ENCODE measurements at regions of chr12 and their contacts with region 1.

Region 1: GRCh38 chr12:28253161-28253641 is 62.9 kb downstream of the CCDC91 start:
- DNase-seq: peak; percentile 66
- H3K4me3 Mint-ChIP-seq: peak overlapping the region; percentile 54
- H3K27ac Mint-ChIP-seq: peak overlapping the region; percentile 86
- H3K4me1 Mint-ChIP-seq: peaks cover 67% of the 10 kb centered on the region
- H3K27me3 Mint-ChIP-seq: no peaks in the 10 kb centered on the region

Region 2: DNA sequence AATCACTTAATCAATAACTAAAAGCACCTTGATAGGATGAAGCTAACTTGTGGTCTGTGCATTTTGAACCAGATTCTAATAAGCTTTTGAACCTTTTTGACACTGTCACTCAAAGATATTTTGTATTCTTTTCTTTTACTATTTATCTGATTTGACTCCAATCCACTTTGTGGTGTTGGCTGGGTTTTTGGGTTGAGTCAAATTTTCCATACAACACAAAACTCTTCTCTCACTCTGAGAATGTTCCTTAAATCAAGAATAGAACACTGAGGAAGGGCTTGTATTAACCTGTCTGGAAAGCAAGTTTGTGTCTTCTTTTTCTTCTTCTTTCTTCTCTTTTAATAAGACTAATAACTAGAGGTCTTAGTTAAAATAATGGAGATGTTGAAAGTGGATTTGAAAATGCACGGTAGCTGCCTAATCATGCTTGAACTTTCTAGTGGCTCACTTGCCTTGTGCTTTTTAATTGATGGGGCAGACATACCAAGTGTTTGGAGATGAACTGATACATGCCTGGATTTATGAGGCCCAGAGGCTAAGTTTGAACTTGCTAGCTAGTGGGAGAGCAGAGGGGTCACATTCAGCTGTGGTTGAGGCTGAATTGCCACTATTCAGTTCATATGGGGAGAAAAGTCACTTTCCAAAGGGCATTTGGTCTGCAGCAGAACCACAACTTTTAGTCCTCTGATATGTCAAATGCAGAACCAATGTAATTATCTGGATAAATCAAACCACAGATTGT is 187.1 kb before region 1 on chr12:
- CTCF ChIA-PET with region 1: no interaction called
- POLR2A ChIA-PET with region 1: no interaction called
- intact Hi-C with region 1: loop called (anchors 1 kb)
- DNase-seq: no peak
- H3K4me3 Mint-ChIP-seq: no peak overlapping the region
- H3K27ac Mint-ChIP-seq: no peak overlapping the region
- H3K4me1 Mint-ChIP-seq: peaks cover 11% of the 10 kb centered on the region
- H3K27me3 Mint-ChIP-seq: peaks cover 3% of the 10 kb centered on the region

Region 3: DNA sequence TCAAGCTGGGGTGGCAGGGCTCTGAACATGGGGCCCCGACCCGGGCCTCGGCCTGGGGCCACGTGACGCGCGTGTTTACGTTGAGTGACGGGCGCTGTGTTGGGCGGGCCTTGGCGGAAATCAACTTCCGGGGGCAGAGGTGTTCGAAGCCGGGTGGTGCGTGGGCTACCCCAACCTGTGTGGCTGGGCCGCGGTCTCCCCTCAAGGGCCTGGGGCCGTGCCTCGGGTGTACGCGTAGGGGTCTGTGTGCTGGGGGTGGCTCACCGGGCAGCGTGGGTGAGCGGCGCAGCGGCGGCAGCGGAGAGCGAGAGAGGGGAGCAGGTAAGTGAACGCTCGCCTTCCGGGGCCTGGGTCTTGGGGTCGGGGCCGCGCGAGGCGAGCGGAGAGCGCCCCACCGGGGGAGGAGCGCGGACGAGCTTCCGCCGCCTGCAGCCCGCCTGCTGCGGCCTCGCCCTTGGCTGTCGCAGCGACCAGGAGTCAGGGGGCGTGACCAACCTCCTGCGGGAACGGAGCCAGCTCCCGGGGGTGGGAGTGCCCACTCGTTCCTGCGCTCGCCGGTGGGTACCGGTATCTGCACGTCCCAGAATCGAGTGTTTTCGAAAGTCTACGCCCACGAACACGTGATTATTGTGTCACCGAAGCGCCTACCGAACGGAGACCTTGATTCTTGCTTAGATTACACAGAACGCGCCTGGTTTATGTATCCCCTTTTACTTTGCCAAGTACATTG is 62.7 kb before region 1 on chr12 and contains the start of gene CCDC91:
- CTCF ChIA-PET with region 1: interaction called, 4 read pairs
- POLR2A ChIA-PET with region 1: interaction called, 10 read pairs
- intact Hi-C with region 1: loop called (anchors 1 kb)
- DNase-seq: peak; percentile 92
- H3K4me3 Mint-ChIP-seq: peak within 1 kb of the TSS; percentile 98
- H3K27ac Mint-ChIP-seq: peak within 1 kb of the TSS; percentile 99
- H3K4me1 Mint-ChIP-seq: peaks cover 57% of the 10 kb centered on the region
- H3K27me3 Mint-ChIP-seq: no peaks in the 10 kb centered on the region
- total RNA-seq, gene CCDC91: 16.5 to 19.7 TPM

Region 4: DNA sequence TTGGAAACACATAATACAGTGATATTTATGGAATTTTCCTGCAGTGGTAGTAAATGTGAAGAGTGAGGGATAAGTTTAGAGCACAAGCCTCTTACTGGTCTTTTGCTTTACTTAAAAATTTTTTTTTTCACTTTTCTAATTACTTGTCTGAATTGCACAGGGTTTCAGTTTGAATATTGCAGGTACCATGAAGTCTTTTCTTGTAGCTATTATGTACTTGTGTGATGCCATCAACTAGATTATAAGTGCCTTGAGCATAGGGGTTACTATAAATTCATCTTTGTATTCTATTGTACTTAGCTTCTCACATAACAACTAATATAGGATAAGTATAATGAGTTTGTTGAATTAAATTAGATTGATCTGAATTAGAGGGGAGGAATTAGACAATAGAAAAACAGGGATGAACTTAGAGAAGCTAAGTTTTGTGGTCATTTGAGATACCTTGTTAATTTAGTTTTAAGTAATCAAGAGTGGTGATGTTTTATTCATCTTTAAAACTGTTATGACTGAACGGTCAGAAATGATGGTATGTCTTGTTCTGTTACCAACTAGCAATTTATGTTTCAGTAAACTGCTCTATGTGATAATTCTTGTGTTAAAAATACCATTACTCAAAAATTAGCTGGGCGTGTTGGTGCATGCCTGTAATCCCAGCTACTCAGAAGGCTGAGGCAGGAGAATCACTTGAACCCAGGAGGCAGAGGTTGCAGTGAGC is 20.8 kb before region 1 on chr12:
- CTCF ChIA-PET with region 1: no interaction called
- POLR2A ChIA-PET with region 1: no interaction called
- intact Hi-C with region 1: loop called (anchors 1 kb)
- DNase-seq: no peak
- H3K4me3 Mint-ChIP-seq: no peak overlapping the region
- H3K27ac Mint-ChIP-seq: no peak overlapping the region
- H3K4me1 Mint-ChIP-seq: peaks cover 39% of the 10 kb centered on the region
- H3K27me3 Mint-ChIP-seq: no peaks in the 10 kb centered on the region

Region 5: DNA sequence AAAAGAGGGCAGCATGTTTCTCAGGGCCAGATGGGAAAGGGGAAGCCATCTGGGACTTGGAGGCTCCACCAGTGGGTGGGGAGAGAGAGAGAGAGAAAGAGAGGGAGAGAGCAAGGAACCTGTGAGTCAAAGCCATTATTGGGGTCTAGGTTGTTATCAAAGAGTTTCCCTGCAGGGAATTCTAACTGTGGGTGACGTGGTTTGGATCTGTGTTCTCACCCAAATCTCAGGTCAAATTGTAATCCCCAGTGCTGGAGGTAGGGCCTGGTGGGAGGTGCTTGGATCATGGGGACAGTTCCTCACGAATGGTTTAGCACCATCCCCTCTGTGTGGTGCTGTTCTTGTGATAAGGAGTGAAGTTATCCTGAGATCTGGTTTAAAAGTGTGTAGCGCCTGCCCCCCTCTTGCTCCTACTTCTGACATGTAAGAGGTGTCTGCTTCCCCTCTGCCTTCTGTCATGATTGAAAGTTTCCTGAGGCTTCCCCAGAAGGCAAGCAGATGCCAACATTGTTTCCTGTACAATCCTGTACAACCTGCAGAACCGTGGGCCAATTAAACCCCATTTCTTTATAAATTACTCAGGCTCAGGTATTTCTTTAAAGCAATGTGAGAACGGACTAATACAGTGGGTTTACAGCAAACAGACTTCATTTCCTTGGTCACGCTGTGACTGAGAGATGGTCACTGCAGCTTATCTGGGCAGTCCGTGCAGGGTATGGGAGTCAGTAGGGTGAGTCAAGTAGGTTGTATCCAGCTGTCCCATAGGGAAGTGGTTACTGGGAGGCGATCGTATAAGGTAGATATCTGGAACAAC is 10.5 kb before region 1 on chr12:
- CTCF ChIA-PET with region 1: no interaction called
- POLR2A ChIA-PET with region 1: no interaction called
- intact Hi-C with region 1: no loop called
- DNase-seq: no peak
- H3K4me3 Mint-ChIP-seq: no peak overlapping the region
- H3K27ac Mint-ChIP-seq: no peak overlapping the region
- H3K4me1 Mint-ChIP-seq: peaks cover 10% of the 10 kb centered on the region
- H3K27me3 Mint-ChIP-seq: no peaks in the 10 kb centered on the region

Region 6: GRCh38 chr12:28278499-28278898 is 25.3 kb after region 1 on chr12:
- CTCF ChIA-PET with region 1: no interaction called
- POLR2A ChIA-PET with region 1: no interaction called
- intact Hi-C with region 1: no loop called
- DNase-seq: no peak
- H3K4me3 Mint-ChIP-seq: no peak overlapping the region
- H3K27ac Mint-ChIP-seq: no peak overlapping the region
- H3K4me1 Mint-ChIP-seq: peaks cover 9% of the 10 kb centered on the region
- H3K27me3 Mint-ChIP-seq: no peaks in the 10 kb centered on the region

Region 7: DNA sequence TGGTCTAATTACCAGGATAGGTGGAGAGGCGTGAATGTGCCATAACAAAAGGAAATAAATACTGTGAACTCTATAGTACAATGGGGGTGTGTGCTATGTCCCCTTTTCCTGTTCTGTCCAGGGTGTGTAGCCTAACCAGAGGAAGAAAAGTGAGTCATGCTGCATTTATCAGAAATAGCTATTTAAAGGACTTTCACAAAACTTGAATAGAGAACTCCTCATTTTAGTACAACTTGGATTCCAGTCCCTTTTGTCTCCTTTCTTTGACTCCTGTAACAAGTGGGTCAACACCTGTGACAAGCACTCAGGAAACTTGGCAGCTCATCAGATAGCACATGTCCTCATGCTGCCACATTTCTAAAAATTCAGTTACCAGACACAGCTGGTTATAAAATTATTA is 60.4 kb after region 1 on chr12:
- CTCF ChIA-PET with region 1: no interaction called
- POLR2A ChIA-PET with region 1: no interaction called
- intact Hi-C with region 1: no loop called
- DNase-seq: no peak
- H3K4me3 Mint-ChIP-seq: no peak overlapping the region
- H3K27ac Mint-ChIP-seq: no peak overlapping the region
- H3K4me1 Mint-ChIP-seq: no peaks in the 10 kb centered on the region
- H3K27me3 Mint-ChIP-seq: no peaks in the 10 kb centered on the region

Region 8: GRCh38 chr12:28550757-28551704 is 297.8 kb after region 1 on chr12:
- CTCF ChIA-PET with region 1: no interaction called
- POLR2A ChIA-PET with region 1: no interaction called
- intact Hi-C with region 1: loop called (anchors 10 kb)
- DNase-seq: no peak
- H3K4me3 Mint-ChIP-seq: no peak overlapping the region
- H3K27ac Mint-ChIP-seq: no peak overlapping the region
- H3K4me1 Mint-ChIP-seq: peaks cover 12% of the 10 kb centered on the region
- H3K27me3 Mint-ChIP-seq: no peaks in the 10 kb centered on the region

Region 9: DNA sequence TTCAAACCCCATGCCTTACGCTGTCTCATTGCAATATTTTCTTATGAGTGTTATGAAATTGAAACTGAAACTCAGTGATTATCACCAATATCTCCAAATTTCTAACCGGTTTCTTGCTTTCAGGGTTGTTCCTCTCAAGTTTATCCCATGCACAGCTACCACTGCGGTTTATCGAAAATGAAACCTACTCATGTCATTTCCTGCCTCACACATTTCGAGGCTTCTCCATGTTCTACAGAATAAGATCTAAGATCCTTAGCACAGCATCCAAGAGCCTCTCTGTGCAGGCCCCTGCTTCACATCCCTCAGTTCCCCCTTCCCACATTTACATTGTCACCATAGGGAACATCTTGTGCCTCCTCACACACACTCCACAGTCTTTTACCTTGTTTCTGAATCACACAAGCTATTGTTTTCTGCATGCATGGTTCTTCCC is 850.4 kb after region 1 on chr12:
- CTCF ChIA-PET with region 1: no interaction called
- POLR2A ChIA-PET with region 1: no interaction called
- intact Hi-C with region 1: loop called (anchors 5 kb)
- DNase-seq: peak; percentile 64
- H3K4me3 Mint-ChIP-seq: peak overlapping the region; percentile 4
- H3K27ac Mint-ChIP-seq: peak overlapping the region; percentile 56
- H3K4me1 Mint-ChIP-seq: peaks cover 32% of the 10 kb centered on the region
- H3K27me3 Mint-ChIP-seq: no peaks in the 10 kb centered on the region